Caco-2 (cell line): ENCODE measurements at regions of chr17 and their contacts with region 1.

Region 1: DNA sequence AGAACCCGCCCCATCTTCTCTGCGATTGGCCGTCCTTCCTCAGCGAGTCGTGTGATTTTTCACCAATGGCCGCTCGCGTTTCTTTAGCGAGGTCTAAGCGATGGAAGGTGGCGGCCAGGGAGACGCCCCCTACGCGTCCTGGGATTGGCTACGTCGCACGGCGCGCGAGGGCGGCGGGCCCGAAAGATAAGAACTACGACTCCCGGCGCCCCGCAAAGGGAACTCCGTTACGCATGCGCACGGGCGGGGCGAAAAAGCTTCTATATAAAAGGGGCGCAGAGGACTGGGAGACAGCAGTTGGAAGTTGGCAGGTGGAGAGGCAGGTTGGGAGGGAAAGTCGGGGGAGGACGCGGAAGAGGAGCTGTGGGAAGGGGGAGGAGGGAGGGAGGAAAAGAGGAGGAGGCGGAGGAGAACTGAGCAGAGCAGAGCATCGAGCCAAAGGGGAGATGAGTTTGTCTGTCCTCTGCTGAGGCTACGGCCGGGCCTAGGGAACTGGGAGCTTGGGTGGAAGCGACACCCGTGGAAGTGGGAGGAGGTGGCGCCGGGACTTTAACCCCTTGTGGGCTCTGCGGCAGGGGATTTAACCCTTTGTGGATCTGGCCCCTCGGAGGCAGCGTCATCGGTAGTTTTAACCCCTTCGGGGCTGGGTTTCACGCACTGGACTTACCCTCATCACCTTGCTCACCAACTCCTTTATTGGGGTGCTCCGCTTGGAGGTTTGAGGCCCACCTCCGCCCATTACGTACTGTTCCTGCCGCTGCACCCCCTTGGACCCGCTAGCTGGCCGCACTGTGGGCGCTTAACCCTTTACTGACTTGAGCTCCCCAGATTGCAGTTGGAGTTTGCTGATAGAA is at the start of gene HEXIM1:
- DNase-seq: peak; percentile 99
- H3K4me3 ChIP-seq: peak within 1 kb of the TSS; percentile 70
- H3K4me3 Mint-ChIP-seq: peak within 1 kb of the TSS; percentile 99
- H3K27ac Mint-ChIP-seq: peak within 1 kb of the TSS; percentile 94
- H3K4me1 ChIP-seq: peaks cover 17% of the 10 kb centered on the region
- H3K4me1 Mint-ChIP-seq: peaks cover 15% of the 10 kb centered on the region
- H3K27me3 ChIP-seq: no peaks in the 10 kb centered on the region
- H3K27me3 Mint-ChIP-seq: peaks cover 4% of the 10 kb centered on the region
- CTCF ChIP-seq: no peak
- total RNA-seq, gene HEXIM1: 71.0 and 78.0 TPM in 2 replicates

Region 2: GRCh38 chr17:43952717-43953666 is 1195.4 kb before region 1 on chr17:
- CTCF ChIA-PET with region 1: no interaction called
- POLR2A ChIA-PET with region 1: interaction called, 14 read pairs
- intact Hi-C with region 1: no loop called
- DNase-seq: no peak
- H3K4me3 ChIP-seq: no peak overlapping the region
- H3K4me3 Mint-ChIP-seq: peak overlapping the region; percentile 53
- H3K27ac Mint-ChIP-seq: no peak overlapping the region
- H3K4me1 ChIP-seq: peaks cover 12% of the 10 kb centered on the region
- H3K4me1 Mint-ChIP-seq: no peaks in the 10 kb centered on the region
- H3K27me3 ChIP-seq: no peaks in the 10 kb centered on the region; the same call in 1 of the 2 replicates
- H3K27me3 Mint-ChIP-seq: peaks cover 11% of the 10 kb centered on the region
- CTCF ChIP-seq: no peak

Region 3: DNA sequence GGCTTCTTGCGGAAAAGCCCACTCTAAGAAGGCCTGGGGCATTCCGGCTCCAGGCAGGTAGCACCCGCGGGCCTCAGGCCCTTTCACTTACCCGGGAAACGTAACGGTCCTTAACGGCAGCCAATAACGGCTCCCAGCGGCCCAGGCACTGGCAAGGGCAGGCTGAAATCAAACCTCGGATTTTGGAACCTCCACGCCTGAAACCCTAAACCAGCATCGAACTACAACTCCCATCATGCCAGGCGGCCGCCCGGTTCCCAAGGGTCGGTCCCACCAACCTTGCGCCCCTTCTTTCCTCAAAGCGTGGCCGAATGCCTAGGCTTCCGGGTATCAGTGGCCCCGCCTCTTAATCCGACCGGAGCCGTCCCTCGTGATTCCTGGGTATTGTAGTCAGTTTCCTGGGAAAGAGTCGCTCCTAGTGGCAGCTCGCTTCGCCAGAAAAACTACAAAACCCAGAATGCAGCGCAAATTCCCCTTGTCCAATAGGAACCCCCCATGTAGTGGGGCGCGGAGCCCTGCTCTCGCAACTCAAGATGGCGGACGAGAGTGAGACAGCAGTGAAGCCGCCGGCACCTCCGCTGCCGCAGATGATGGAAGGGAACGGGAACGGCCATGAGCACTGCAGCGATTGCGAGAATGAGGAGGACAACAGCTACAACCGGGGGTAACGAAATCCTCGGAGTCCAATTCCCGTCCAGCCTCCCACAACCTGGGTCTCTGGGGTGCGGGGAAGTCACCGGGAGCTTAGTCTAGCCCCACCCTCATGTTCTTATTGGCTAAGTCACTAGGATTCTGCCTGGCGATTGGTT is 87.4 kb before region 1 on chr17 and contains the start of gene NMT1:
- CTCF ChIA-PET with region 1: interaction called, 4 read pairs
- POLR2A ChIA-PET with region 1: interaction called, 16 read pairs
- intact Hi-C with region 1: no loop called
- DNase-seq: peak; percentile 98 to 99
- H3K4me3 ChIP-seq: peak within 1 kb of the TSS; percentile 92
- H3K4me3 Mint-ChIP-seq: peak within 1 kb of the TSS; percentile 97
- H3K27ac Mint-ChIP-seq: peak within 1 kb of the TSS; percentile 100
- H3K4me1 ChIP-seq: peaks cover 16% of the 10 kb centered on the region
- H3K4me1 Mint-ChIP-seq: peaks cover 17% of the 10 kb centered on the region
- H3K27me3 ChIP-seq: no peaks in the 10 kb centered on the region
- H3K27me3 Mint-ChIP-seq: no peaks in the 10 kb centered on the region
- CTCF ChIP-seq: no peak
- total RNA-seq, gene NMT1: 173 and 179 TPM in 2 replicates

Region 4: DNA sequence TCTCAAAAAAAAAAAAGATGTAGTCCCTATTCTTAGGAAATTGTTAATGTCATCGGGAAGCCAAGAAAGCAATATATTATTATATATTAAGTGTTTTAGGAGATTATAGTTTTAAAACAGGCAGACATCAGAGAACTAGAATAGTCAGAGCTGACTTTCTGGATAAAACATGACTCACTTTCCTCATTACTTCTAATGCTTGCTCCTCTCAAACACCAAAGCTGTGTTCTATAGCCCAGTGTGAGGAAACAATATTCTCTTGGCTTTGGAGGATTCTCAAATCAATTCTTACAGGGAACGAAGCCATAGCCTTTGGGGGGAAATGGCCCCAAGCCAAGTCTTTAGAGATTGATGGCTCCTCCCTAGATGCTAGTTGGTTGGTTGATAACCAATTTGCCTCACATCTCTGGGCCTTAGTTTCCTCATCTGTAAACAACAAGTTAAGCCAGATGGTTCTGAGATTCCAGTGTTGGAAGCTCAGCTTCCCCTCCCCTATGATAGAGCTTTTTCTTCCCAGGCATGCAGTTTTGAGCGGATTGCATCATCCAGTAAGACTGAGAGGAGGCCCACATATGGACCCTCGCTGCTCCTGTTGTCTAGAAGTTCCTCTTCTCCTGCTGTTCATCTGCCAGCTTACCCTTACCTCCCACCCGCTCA is 74.9 kb before region 1 on chr17:
- CTCF ChIA-PET with region 1: no interaction called
- POLR2A ChIA-PET with region 1: no interaction called
- intact Hi-C with region 1: no loop called
- DNase-seq: peak in 1 of 2 experiments; percentile 21
- H3K4me3 ChIP-seq: no peak overlapping the region
- H3K4me3 Mint-ChIP-seq: no peak overlapping the region
- H3K27ac Mint-ChIP-seq: peak overlapping the region; percentile 73
- H3K4me1 ChIP-seq: no peaks in the 10 kb centered on the region
- H3K4me1 Mint-ChIP-seq: no peaks in the 10 kb centered on the region
- H3K27me3 ChIP-seq: no peaks in the 10 kb centered on the region
- H3K27me3 Mint-ChIP-seq: no peaks in the 10 kb centered on the region
- CTCF ChIP-seq: no peak

Region 5: DNA sequence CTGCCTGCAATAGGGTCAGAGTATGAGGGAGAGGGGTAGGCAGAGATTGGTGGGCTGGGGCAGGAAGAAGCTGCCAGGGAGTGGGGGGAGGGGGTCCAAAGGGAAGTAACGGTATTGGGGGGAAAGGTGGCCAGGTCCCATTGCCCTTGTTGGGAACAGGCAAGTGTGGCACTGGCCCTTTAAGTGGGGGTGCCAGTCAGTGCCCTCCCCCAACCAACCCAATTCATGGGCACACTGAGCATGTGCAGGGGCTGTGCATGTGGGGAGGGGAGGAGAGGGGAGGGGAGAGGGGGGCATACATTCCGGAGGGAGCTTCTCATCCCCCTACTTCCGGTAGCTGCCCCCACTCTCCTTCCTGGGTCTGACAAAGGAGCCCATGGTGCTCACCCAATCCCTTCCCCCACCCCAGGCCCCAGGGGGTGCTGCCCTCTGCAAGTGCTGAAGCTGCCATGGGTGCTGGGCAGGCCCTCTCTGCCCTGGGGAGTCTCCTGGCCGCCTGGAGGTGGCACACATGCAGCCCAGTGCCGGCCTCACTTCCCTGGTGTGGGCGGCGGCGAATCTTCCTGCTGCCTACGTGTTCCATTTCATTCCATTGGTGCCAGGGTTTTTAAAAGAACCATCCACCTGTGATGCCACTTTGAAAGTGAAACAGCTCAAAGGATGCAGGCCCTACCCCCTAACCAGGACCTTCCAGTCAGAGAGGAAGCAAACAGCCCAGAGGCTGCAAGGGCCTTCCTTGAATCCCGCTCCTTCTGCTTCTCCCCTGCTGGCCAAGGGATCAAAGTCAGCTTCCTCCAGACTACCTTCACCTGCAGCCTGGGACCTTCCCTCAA is 24.3 kb after region 1 on chr17:
- CTCF ChIA-PET with region 1: interaction called, 38 read pairs
- POLR2A ChIA-PET with region 1: interaction called, 127 read pairs
- intact Hi-C with region 1: loop called (anchors 1 kb)
- DNase-seq: peak; percentile 42 to 67
- H3K4me3 ChIP-seq: peak overlapping the region; percentile 2; the same call in 1 of the 2 replicates
- H3K4me3 Mint-ChIP-seq: peak overlapping the region; percentile 64
- H3K27ac Mint-ChIP-seq: peak overlapping the region; percentile 94
- H3K4me1 ChIP-seq: peaks cover 70% of the 10 kb centered on the region
- H3K4me1 Mint-ChIP-seq: peaks cover 45% of the 10 kb centered on the region
- H3K27me3 ChIP-seq: no peaks in the 10 kb centered on the region
- H3K27me3 Mint-ChIP-seq: no peaks in the 10 kb centered on the region
- CTCF ChIP-seq: peak in 1 of 2 experiments; percentile 0

Region 6: DNA sequence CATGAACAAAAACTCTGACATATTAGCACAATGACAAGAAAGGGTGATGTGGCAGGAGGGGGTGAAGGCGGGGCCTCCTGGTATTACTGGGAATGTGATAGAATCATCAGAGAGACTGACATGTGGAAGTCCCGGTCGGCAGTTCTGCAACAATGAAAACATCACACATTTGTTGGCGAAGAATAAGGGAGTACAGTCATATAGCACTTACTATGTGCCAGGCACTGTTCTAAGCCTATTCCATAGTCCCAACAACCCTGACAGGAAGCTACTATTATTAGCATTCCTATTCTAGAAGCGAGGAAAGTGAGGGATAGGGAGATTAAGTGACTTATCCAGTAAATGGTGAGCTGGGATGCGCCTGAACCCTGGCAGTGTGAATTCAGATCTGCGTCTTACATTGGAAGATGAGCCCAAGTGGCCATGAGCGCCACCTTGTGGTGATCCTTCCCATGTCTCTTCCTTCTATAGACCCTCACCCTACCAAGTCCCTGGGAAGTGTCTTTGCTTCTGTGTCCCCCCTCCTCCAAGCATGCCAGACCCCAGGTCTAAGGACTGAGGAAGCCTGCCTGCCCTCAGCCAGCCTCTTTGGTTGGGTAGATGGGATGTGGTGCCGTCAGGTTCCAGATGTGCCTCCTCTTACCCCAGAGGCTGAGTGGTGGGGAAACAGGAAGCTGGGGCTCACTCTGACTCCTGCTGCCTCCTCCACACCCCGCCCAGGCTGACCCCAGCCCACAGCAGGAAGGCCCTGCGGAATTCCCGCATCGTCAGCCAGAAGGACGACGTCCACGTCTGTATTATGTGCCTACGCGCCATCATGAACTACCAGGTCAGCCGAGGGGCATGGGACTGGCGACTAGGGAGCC is 87.2 kb after region 1 on chr17:
- CTCF ChIA-PET with region 1: interaction called, 7 read pairs
- POLR2A ChIA-PET with region 1: interaction called, 10 read pairs
- intact Hi-C with region 1: no loop called
- DNase-seq: peak; percentile 72 to 77
- H3K4me3 ChIP-seq: no peak overlapping the region
- H3K4me3 Mint-ChIP-seq: no peak overlapping the region
- H3K27ac Mint-ChIP-seq: no peak overlapping the region
- H3K4me1 ChIP-seq: peaks cover 6% of the 10 kb centered on the region; the same call in 1 of the 2 replicates
- H3K4me1 Mint-ChIP-seq: no peaks in the 10 kb centered on the region
- H3K27me3 ChIP-seq: no peaks in the 10 kb centered on the region
- H3K27me3 Mint-ChIP-seq: peaks cover 4% of the 10 kb centered on the region
- CTCF ChIP-seq: peak; percentile 82 to 86

Region 7: DNA sequence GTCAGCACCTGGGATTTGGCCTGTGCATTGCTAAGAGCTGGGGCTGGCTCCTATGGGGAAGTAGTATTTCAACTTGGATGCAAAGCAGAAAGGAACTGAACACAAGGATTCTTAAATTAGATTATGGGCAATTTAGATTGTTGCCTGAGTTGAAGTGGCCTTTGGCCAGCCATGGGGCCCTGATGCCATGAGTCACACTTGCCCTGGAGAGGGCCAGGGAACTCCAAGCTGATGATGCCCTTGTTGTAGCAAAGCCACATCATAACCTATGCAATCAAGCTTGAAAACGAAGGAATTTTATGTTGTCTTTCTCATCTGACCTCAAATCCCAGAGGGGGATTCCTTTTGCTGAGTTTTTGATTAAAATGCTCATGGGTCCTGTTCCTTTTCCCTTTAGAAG is 117.4 kb after region 1 on chr17:
- CTCF ChIA-PET with region 1: no interaction called
- POLR2A ChIA-PET with region 1: no interaction called
- intact Hi-C with region 1: no loop called
- DNase-seq: no peak
- H3K4me3 ChIP-seq: no peak overlapping the region
- H3K4me3 Mint-ChIP-seq: no peak overlapping the region
- H3K27ac Mint-ChIP-seq: no peak overlapping the region
- H3K4me1 ChIP-seq: peaks cover 3% of the 10 kb centered on the region; the same call in 1 of the 2 replicates
- H3K4me1 Mint-ChIP-seq: no peaks in the 10 kb centered on the region
- H3K27me3 ChIP-seq: no peaks in the 10 kb centered on the region
- H3K27me3 Mint-ChIP-seq: no peaks in the 10 kb centered on the region
- CTCF ChIP-seq: no peak

Region 8: DNA sequence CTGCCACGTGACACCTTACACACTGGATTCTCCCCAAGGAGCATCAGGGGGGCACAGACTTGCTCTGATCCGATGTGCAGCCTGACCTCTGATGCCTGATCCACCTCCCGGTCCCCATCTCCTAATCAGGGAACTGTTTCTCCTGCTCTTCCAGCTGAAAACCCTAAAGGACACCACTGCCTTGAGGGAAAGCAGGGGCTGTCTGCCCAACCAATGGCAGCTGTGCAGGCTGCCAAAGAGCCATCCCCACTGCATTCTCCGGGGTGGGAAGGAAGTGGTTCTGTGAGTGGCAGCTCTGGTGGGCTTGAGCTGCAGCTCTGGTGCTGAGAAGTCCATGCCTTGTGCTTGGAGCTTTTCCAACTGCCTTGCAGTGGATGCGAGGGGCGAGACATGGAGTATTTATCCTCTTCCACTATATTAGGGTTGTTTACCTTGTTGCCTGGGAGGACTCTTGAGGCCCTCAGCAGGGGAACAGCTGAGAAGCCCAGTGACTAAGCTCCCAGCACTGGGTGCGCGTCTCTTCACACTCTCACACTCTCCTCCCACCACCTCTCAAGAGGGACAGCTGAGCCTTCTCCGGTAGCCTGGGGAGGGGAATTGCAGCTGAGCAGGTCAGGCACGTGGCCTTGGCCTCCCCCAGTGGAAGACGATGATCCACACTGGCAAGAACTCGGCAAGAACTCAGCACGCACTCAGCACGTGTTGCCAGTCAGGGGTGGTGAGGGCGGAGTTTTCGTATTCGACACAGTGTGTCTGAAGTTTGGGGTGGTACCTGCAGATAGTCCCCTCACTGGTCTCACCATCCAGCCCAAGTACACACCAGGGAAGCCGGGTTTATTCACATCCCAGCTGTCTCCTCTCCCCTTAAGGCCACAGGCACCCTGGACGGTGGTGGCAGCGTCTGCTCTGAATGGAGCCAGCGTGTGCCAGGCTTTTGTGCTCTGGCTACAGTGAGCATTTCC is 134.6 kb after region 1 on chr17:
- CTCF ChIA-PET with region 1: interaction called, 4 read pairs
- POLR2A ChIA-PET with region 1: interaction called, 10 read pairs
- intact Hi-C with region 1: no loop called
- DNase-seq: no peak
- H3K4me3 ChIP-seq: no peak overlapping the region
- H3K4me3 Mint-ChIP-seq: no peak overlapping the region
- H3K27ac Mint-ChIP-seq: no peak overlapping the region
- H3K4me1 ChIP-seq: peaks cover 9% of the 10 kb centered on the region
- H3K4me1 Mint-ChIP-seq: peaks cover 2% of the 10 kb centered on the region
- H3K27me3 ChIP-seq: no peaks in the 10 kb centered on the region
- H3K27me3 Mint-ChIP-seq: no peaks in the 10 kb centered on the region
- CTCF ChIP-seq: no peak

Region 9: GRCh38 chr17:45371414-45372327 is 223.3 kb after region 1 on chr17:
- CTCF ChIA-PET with region 1: interaction called, 4 read pairs
- POLR2A ChIA-PET with region 1: interaction called, 6 read pairs
- intact Hi-C with region 1: loop called (anchors 5 kb)
- DNase-seq: peak; percentile 95 to 96
- H3K4me3 ChIP-seq: peak overlapping the region; percentile 35
- H3K4me3 Mint-ChIP-seq: peak overlapping the region; percentile 74
- H3K27ac Mint-ChIP-seq: peak overlapping the region; percentile 96
- H3K4me1 ChIP-seq: peaks cover 39% of the 10 kb centered on the region
- H3K4me1 Mint-ChIP-seq: peaks cover 27% of the 10 kb centered on the region
- H3K27me3 ChIP-seq: no peaks in the 10 kb centered on the region
- H3K27me3 Mint-ChIP-seq: no peaks in the 10 kb centered on the region
- CTCF ChIP-seq: no peak